Right cardiac atrium (tissue), 5 donors: ENCODE measurements at regions of chr11 and their contacts with region 1.

Region 1: GRCh38 chr11:3854977-3855807 is at the start of gene STIM1:
- DNase-seq: peak; percentile 95 to 98 (median 97)
- ATAC-seq: peak; percentile 95
- H3K4me3 ChIP-seq: peak within 1 kb of the TSS; percentile 88
- H3K27ac ChIP-seq: peak within 1 kb of the TSS; percentile 98
- H3K4me1 ChIP-seq: peaks cover 14% of the 10 kb centered on the region
- H3K27me3 ChIP-seq: no peaks in the 10 kb centered on the region
- total RNA-seq, gene STIM1: 14.4 to 19.3 (median 16.6) TPM

Region 2: DNA sequence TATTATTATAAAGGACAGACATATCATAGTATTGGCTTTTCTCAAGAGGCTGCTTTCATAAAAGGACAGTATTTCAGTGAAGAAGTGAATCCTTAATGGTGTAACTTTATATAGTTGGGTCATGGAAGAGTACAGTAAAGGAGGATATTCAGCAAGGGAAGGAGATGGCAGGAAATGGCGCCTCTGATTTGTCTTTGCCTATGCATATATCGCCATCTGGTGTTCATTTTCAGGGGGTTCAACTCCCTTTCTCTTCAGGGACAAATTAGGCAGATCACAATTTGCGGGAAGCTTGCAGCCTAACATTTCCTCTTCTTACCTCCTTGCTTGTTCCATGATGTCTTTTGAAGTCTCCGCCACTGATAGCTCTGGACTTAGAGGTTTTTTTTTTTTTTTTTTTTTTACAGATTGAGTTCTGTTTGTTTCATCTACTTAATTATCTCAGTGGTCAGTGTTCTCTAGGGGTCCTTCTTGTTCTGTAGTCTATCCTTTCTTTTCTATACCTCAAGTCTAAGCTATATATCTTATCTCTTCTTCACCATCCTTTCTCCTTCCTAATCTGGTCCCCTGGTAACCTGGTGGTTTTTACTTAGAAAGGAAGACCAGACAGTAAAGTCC is 217.6 kb after region 1 on chr11:
- intact Hi-C with region 1: loop called (anchors 2 kb)
- DNase-seq: no peak
- ATAC-seq: peak; percentile 89
- H3K4me3 ChIP-seq: no peak overlapping the region
- H3K27ac ChIP-seq: no peak overlapping the region
- H3K4me1 ChIP-seq: no peaks in the 10 kb centered on the region
- H3K27me3 ChIP-seq: no peaks in the 10 kb centered on the region